ENCODE measurements at regions of chr14 and their contacts with region 1.

Region 1: DNA sequence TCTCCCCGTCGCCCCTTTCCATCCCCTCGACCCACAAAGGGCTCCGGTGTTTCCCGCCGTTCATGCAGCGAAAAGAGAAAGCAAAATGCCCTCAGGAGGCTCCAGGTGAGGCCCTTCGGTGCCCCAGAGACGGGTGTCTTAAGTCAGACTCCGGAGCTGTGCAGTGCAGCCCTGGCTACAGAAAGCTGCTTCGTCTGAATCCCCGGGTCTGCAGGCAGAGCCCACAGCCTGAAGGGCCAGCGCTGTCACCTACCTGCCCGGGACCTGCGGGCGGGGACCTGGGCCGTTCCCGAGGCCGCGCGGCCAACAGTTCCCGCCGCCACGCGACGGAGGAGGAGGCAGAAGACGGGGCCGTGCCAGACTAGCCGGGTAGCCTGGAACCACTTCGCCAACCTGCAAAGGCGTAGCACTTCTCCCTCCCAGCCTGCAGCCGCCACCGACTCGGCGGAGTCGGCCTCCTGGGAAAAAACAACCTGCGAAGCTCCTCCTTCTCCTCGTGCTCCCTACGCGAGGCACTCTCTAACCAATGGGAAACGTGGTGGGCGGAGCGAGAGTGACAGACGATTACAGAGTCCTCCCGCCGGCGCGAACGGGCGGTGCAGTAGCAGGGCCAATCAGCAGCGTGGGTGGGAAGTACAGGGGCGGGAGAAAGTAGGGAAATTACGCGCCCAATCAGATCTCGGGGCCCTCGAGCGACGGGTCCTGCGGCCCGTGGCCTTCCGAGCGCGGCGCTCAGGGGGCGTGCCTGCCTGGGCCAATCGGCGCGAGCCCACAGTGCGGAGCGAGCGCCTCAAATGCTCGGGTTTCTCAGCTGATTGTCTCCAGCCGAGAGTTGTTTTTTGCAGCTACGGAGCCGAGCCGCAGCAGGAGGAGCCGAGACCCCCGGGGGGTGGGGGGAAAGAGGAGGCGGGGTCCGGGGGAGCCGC is at the starts of genes GPR137C and TXNDC16:
- DNase-seq: peak; percentile 100
- ATAC-seq: peak; percentile 93
- H3K4me3 Mint-ChIP-seq: peak within 1 kb of the TSS; percentile 84
- H3K27ac Mint-ChIP-seq: peak within 1 kb of the TSS; percentile 79
- H3K4me1 Mint-ChIP-seq: peaks cover 14% of the 10 kb centered on the region
- H3K27me3 Mint-ChIP-seq: peaks cover 8% of the 10 kb centered on the region
- CTCF ChIP-seq: no peak
- total RNA-seq, gene GPR137C: 0.05 to 0.11 TPM
- total RNA-seq, gene TXNDC16: 5.7 to 6.8 TPM

Region 2: DNA sequence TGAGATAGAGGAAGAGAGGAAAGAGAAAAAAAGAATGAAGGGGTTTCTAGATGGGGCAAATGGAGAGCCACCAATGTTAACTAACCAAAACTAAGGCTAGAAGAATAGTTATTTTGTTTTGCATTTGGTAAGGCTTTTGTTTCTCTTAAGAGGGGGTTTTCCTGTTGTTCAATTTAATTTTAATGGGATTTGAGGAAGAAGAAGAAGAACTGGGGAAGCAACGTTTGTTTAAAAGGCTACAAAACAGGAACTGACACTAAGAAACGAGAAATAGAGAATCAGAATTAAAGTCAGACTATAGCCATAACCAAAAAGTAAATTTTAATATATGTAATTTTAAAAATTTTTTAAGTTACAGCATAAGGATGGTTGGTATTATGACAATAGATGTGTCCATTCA is 13.7 kb before region 1 on chr14:
- CTCF ChIA-PET with region 1: interaction called, 8 read pairs
- POLR2A ChIA-PET with region 1: interaction called, 12 read pairs
- intact Hi-C with region 1: no loop called
- DNase-seq: no peak
- ATAC-seq: no peak
- H3K4me3 Mint-ChIP-seq: no peak overlapping the region
- H3K27ac Mint-ChIP-seq: no peak overlapping the region
- H3K4me1 Mint-ChIP-seq: peaks cover 2% of the 10 kb centered on the region
- H3K27me3 Mint-ChIP-seq: no peaks in the 10 kb centered on the region
- CTCF ChIP-seq: no peak

Region 3: GRCh38 chr14:52563120-52563519 is 10.8 kb after region 1 on chr14:
- CTCF ChIA-PET with region 1: interaction called, 10 read pairs
- POLR2A ChIA-PET with region 1: interaction called, 3 read pairs
- intact Hi-C with region 1: no loop called
- DNase-seq: no peak
- ATAC-seq: peak; percentile 39
- H3K4me3 Mint-ChIP-seq: no peak overlapping the region
- H3K27ac Mint-ChIP-seq: no peak overlapping the region
- H3K4me1 Mint-ChIP-seq: no peaks in the 10 kb centered on the region
- H3K27me3 Mint-ChIP-seq: peaks cover 3% of the 10 kb centered on the region
- CTCF ChIP-seq: no peak